ENCODE measurements at regions of chr13 and their contacts with region 1.

Region 1: DNA sequence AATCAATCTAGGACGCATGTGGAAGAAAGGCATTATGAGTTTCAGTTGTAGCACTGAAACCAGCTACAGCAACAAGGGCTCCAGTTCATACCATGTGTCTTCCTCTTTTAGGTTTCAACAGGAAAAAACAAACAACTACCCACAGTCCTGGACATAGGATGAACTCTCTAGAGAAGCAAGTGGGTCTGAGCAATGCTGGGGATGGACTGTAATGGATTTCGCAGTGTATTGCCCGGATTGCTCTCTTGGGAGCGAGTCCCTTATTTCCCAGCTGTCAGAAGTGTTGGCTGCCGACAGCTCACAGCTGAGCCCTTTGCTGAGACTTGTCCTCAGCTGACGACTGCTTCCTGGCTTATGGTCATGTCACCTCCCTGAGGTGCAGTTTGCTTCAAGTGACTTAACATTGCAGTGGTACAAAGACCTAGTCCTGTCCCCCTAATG is 12.1 kb upstream of the MYCBP2 start:
- DNase-seq: no peak
- ATAC-seq: peak; percentile 26 to 73 (median 53)
- H3K4me3 ChIP-seq: no peak overlapping the region
- H3K27ac ChIP-seq: peak overlapping the region in 1 of 12 donors; percentile 45
- H3K4me1 ChIP-seq: peaks cover 0 to 14% (median 0%) of the 10 kb centered on the region in 12 donors
- H3K27me3 ChIP-seq: peaks cover 0 to 4% (median 0%) of the 10 kb centered on the region in 9 donors
- CTCF ChIP-seq: no peak
- POLR2A ChIP-seq: no peak

Region 2: DNA sequence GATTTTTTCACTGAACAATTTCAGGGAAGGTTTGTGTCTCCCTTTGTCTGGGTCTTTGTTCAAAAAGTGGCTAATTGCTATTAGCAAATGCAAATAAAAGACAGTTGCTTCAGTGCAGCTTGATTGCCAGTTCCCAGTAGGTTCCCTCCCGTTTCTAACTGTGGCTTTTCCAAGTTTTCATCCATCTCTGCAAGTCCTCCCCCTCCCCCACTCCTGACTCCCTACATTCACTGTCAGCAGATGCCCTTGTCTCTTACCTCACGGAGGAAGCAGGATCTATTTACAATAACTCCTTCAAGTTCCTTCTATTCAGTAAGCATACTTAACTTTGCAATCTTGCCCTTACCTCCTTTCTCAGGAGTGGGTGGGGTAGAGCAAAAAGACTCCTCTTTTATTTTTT is 141.1 kb after region 1 on chr13:
- intact Hi-C with region 1: loop called in 2 of 10 experiments (anchors 5 to 10 kb)
- DNase-seq: no peak
- ATAC-seq: no peak
- H3K4me3 ChIP-seq: no peak overlapping the region
- H3K27ac ChIP-seq: no peak overlapping the region
- H3K4me1 ChIP-seq: peaks cover 0 to 6% (median 0%) of the 10 kb centered on the region in 12 donors
- H3K27me3 ChIP-seq: no peaks in the 10 kb centered on the region
- CTCF ChIP-seq: no peak
- POLR2A ChIP-seq: no peak